Activated CD4-positive, alpha-beta T cell treated with anti-CD3 and anti-CD28 coated beads, Interleukin-2, amount 10 ng/mL, durations not matched to agents 24 days and 14 days (primary cell): ENCODE measurements at regions of chr6 and their contacts with region 1.

Region 1: GRCh38 chr6:33771146-33772081 is 17.5 kb downstream of the LEMD2 start:
- DNase-seq: peak; percentile 89
- H3K4me3 Mint-ChIP-seq: no peak overlapping the region
- H3K27ac Mint-ChIP-seq: no peak overlapping the region
- H3K4me1 Mint-ChIP-seq: peaks cover 17% of the 10 kb centered on the region
- H3K27me3 Mint-ChIP-seq: peaks cover 5% of the 10 kb centered on the region

Region 2: DNA sequence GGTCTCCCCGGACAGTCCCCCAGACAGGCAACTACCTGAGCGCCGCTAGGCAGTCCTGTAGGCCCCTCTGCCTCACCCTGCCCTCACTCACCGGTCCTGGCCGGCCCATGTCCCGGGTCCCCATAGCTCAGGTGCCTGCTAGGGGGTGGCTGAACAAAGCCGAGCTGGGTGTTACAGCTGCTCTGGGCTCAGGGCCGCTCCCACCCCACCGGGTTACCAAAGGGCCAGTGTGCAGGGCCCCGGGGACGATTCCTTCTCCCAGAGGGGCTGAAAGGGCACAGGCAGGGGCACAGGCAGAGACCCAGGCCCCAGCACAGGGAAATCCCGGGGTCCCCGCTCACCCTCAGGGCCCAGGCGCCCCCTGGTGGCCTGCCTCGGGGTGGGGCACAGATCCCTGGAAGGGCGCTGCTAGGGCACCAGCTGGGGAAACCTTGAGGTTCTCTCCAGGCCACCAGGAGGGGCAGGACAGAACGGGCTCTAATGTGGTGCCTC is 256.1 kb after region 1 on chr6:
- intact Hi-C with region 1: loop called (anchors 1 kb)
- DNase-seq: peak; percentile 90
- H3K4me3 Mint-ChIP-seq: no peak overlapping the region
- H3K27ac Mint-ChIP-seq: no peak overlapping the region
- H3K4me1 Mint-ChIP-seq: no peaks in the 10 kb centered on the region
- H3K27me3 Mint-ChIP-seq: peaks cover 4% of the 10 kb centered on the region